ENCODE measurements at regions of chr4 and their contacts with region 1.

Region 1: GRCh38 chr4:128287871-128288688 is 467 bp upstream of the PGRMC2 start:
- DNase-seq: peak; percentile 94
- ATAC-seq: peak; percentile 76
- H3K4me3 ChIP-seq: peak overlapping the region; percentile 89
- H3K27ac ChIP-seq: peak overlapping the region; percentile 57
- H3K4me1 ChIP-seq: peaks cover 24% of the 10 kb centered on the region
- H3K27me3 ChIP-seq: no peaks in the 10 kb centered on the region
- CTCF ChIP-seq: no peak

Region 2: GRCh38 chr4:128060699-128061565 is 227.1 kb before region 1 on chr4 and contains the start of gene LARP1B:
- CTCF ChIA-PET with region 1: no interaction called
- POLR2A ChIA-PET with region 1: no interaction called
- intact Hi-C with region 1: loop called (anchors 10 kb)
- DNase-seq: peak; percentile 90
- ATAC-seq: peak; percentile 83
- H3K4me3 ChIP-seq: peak within 1 kb of the TSS; percentile 92
- H3K27ac ChIP-seq: peak within 1 kb of the TSS; percentile 86
- H3K4me1 ChIP-seq: peaks cover 9% of the 10 kb centered on the region; the same call in 1 of the 2 replicates
- H3K27me3 ChIP-seq: no peaks in the 10 kb centered on the region
- CTCF ChIP-seq: no peak
- total RNA-seq, gene LARP1B: 14.8 and 22.2 TPM in 2 replicates

Region 3: DNA sequence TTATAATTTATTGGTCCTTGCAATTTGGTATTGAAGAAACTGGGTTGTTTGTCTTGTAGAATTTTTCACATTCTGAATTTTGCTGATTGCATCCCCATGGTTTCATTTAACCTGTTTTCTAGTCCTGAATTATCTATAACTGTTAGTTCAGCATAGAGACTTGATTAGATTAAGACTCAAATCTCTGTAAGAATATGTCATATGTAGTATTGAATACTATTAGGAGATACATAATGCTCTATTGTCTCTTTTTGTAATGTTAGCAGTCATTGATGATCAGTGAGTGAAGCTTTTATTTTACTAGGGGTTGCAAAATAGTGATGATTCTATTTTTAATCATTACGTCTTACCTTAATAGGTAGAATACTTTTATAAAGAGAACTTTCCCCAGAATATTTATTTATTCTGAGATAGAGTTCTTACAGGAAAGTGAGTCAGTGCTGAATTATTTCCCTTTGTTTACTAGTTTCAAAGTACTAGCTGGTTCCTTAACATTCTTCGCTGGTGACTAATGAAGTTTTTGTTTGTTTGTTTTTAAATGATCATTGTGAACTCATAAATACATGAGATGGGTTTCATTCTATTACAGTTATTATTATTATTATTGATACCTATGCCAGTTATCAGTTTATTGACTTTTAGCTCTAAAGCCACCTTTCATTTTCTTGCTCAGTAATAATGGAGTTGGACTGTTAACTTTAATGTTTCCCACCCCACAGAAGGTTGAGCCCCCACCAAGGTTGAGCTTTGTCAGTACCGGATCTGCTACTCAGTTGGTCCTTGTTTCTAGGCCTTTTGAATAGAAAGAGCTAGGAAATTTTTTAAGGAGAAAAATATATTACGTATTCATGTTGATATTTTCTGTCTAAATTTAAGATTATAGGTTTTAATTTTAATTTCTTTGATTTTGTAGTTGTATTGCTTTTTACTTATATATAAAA is 124.6 kb before region 1 on chr4:
- CTCF ChIA-PET with region 1: no interaction called
- POLR2A ChIA-PET with region 1: no interaction called
- intact Hi-C with region 1: no loop called
- DNase-seq: peak; percentile 92
- ATAC-seq: peak; percentile 56
- H3K4me3 ChIP-seq: peak overlapping the region; percentile 15; the same call in 1 of the 2 replicates
- H3K27ac ChIP-seq: peak overlapping the region; percentile 75
- H3K4me1 ChIP-seq: peaks cover 35% of the 10 kb centered on the region
- H3K27me3 ChIP-seq: no peaks in the 10 kb centered on the region
- CTCF ChIP-seq: no peak

Region 4: DNA sequence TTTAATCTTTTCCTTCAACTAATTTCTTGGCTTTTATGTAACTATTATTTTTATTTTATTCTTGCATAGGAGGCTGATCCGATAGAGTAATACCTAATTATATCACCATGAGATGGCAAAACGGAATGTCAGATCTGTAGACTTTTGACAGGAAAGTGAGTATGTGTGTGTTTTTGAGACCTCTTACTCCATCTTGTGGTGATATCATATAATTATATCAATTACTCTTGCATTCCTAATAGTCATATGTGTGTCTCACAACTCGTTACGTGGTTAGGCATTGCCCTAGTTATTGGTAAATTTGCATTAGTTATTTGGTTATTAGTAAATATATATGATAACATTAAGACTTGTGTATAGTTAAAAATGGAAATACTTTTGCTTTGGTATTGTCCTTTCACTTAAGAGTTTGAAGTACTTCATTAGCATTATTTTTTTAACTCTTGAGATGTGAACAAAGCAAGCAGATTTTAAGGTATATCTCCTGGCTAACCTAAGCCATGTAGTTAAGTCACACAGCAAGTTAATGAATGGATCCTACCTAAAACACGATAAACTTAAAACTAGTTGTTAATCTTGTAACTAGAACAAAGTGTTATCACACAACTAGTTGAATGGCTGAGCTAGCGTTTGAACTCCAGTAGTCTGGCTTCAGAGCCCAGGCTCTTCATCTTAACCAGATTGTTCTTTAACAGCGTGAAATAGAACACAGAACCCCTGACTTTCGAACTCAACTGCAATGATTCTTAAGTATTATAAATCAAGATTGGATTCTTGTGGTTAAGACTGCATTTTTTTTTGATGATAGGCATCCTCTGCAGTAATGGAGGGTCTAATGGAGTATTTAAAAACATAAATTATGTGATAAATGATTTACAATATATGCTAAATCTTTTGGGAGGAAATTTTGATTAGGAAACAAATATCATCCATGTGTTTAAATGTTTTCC is 67.5 kb before region 1 on chr4:
- CTCF ChIA-PET with region 1: no interaction called
- POLR2A ChIA-PET with region 1: no interaction called
- intact Hi-C with region 1: loop called (anchors 5 kb)
- DNase-seq: peak; percentile 63
- ATAC-seq: peak; percentile 84
- H3K4me3 ChIP-seq: no peak overlapping the region
- H3K27ac ChIP-seq: no peak overlapping the region
- H3K4me1 ChIP-seq: peaks cover 8% of the 10 kb centered on the region
- H3K27me3 ChIP-seq: no peaks in the 10 kb centered on the region
- CTCF ChIP-seq: peak; percentile 58

Region 5: DNA sequence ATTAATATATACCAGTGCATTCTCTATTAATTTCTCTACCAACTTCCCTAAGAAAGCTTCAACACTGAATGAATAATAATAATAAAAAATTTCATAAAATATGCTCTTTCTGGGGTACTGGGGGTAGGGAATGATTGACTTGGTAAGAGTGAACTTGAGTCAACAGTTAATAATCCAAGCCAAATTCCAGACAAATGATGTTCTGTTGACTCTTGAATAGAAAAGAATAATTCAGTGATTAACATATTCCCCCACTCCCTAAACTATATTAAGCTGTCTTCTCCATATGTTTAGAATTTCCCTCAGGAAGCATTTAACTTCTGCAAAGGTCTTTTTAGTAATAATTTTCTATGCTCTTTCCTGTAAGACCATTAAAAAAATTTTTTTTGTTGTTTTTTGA is 12.7 kb before region 1 on chr4:
- CTCF ChIA-PET with region 1: no interaction called
- POLR2A ChIA-PET with region 1: no interaction called
- intact Hi-C with region 1: no loop called
- DNase-seq: peak; percentile 54
- ATAC-seq: peak; percentile 58
- H3K4me3 ChIP-seq: no peak overlapping the region
- H3K27ac ChIP-seq: peak overlapping the region; percentile 10; the same call in 1 of the 2 replicates
- H3K4me1 ChIP-seq: peaks cover 19% of the 10 kb centered on the region
- H3K27me3 ChIP-seq: no peaks in the 10 kb centered on the region
- CTCF ChIP-seq: no peak

Region 6: GRCh38 chr4:128322995-128323394 is 34.9 kb after region 1 on chr4:
- CTCF ChIA-PET with region 1: no interaction called
- POLR2A ChIA-PET with region 1: interaction called, 4 read pairs
- intact Hi-C with region 1: loop called (anchors 2 kb)
- DNase-seq: peak; percentile 86
- ATAC-seq: peak; percentile 87
- H3K4me3 ChIP-seq: peak overlapping the region; percentile 45; the same call in 1 of the 2 replicates
- H3K27ac ChIP-seq: peak overlapping the region; percentile 82
- H3K4me1 ChIP-seq: peaks cover 35% of the 10 kb centered on the region
- H3K27me3 ChIP-seq: no peaks in the 10 kb centered on the region
- CTCF ChIP-seq: no peak

Region 7: GRCh38 chr4:128358231-128358912 is 70.3 kb after region 1 on chr4:
- CTCF ChIA-PET with region 1: no interaction called
- POLR2A ChIA-PET with region 1: no interaction called
- intact Hi-C with region 1: no loop called
- DNase-seq: no peak
- ATAC-seq: no peak
- H3K4me3 ChIP-seq: no peak overlapping the region
- H3K27ac ChIP-seq: no peak overlapping the region
- H3K4me1 ChIP-seq: peaks cover 13% of the 10 kb centered on the region
- H3K27me3 ChIP-seq: no peaks in the 10 kb centered on the region
- CTCF ChIP-seq: no peak

Region 8: GRCh38 chr4:128379860-128380259 is 91.8 kb after region 1 on chr4:
- CTCF ChIA-PET with region 1: interaction called, 4 read pairs
- POLR2A ChIA-PET with region 1: no interaction called
- intact Hi-C with region 1: loop called (anchors 5 kb)
- DNase-seq: peak; percentile 44
- ATAC-seq: peak; percentile 54
- H3K4me3 ChIP-seq: no peak overlapping the region
- H3K27ac ChIP-seq: no peak overlapping the region
- H3K4me1 ChIP-seq: no peaks in the 10 kb centered on the region
- H3K27me3 ChIP-seq: no peaks in the 10 kb centered on the region
- CTCF ChIP-seq: peak; percentile 66

Measured in PC-3 (cell line).